ENCODE measurements at regions of chr17 and their contacts with region 1.

Region 1: DNA sequence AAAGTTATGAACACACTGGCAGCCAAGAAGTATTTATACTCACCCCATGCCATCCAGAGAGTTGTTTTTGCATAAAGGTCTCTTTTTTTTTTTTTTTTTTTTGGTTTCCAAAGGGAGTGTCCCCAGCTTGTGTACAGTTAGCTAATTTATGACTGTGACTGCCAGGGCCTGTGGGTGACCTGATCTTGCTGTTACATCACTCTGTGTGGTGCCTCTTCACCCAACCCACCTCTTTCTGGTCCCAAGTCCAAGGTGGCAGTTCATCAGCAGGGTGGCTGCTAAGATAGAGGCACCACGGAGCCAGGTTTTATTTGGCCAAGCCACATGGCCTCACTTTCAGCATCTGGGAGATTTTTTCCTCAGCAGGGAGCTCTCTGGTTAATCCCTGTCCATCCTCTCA is at the start of gene NOS2:
- DNase-seq: no peak
- H3K4me3 ChIP-seq: no peak within 1 kb of the TSS
- H3K27ac ChIP-seq: no peak within 1 kb of the TSS
- H3K4me1 ChIP-seq: peaks cover 4% of the 10 kb centered on the region
- H3K27me3 ChIP-seq: peaks cover 39% of the 10 kb centered on the region
- CTCF ChIP-seq: no peak
- total RNA-seq, gene NOS2: 0.19 TPM

Region 2: GRCh38 chr17:27862004-27862403 is 61.5 kb after region 1 on chr17:
- intact Hi-C with region 1: no loop called
- DNase-seq: no peak
- H3K4me3 ChIP-seq: no peak overlapping the region
- H3K27ac ChIP-seq: no peak overlapping the region
- H3K4me1 ChIP-seq: no peaks in the 10 kb centered on the region
- H3K27me3 ChIP-seq: no peaks in the 10 kb centered on the region
- CTCF ChIP-seq: no peak

Region 3: DNA sequence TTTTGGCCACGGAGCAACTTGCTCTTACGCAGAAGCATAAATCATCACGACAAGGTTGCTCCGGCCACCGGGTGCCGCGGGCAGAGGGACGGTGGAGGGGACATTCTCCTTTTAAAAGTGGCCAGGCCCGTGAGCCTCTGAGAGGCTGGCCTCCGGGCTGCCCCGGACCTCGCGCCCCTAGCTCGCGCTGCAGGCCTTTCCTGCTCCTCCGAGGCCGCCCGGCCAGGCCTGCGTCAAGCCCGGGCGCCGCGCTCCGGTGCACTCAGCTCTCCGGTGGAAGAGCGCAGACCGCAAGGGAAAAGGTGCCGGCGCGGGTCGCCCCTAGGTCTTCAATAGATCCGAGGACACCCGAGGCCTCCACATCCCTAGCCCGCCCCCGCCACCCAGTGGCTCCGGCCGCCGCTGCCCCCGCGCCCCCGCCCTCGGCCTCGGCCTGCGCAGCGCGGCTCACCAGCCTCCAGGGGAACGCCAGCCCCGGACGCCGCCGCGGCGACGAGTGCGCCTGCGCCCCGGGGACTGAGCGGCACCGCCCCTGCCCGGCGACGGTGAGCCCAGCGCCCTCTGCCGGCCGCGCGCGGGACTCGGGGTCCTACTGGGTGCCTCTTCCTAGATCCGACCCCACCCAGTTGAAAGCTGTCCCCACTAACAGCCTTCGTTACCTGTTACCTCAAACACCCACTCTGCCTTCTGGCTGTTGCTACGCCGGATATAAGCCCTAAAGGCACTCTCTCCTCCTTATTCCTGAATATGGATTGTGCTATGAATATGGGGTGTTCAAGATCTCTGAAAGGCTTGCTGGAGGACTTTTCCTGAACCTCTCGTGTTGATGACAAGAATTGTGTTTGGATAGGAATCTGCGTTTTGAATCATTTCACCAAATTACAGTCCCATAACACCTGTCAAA is 92.6 kb after region 1 on chr17 and contains the start of gene LYRM9:
- intact Hi-C with region 1: loop called (anchors 5 kb)
- DNase-seq: peak; percentile 93
- H3K4me3 ChIP-seq: peak within 1 kb of the TSS; percentile 77
- H3K27ac ChIP-seq: peak within 1 kb of the TSS; percentile 91
- H3K4me1 ChIP-seq: peaks cover 32% of the 10 kb centered on the region
- H3K27me3 ChIP-seq: no peaks in the 10 kb centered on the region
- CTCF ChIP-seq: peak; percentile 94
- total RNA-seq, gene LYRM9: 8.3 TPM

Measured in left ventricle myocardium inferior (tissue), 1 donor.